Mammary epithelial cell (primary cell): ENCODE measurements at regions of chr2 and their contacts with region 1.

Region 1: GRCh38 chr2:241508240-241509154 is at the start of gene STK25:
- DNase-seq: peak; percentile 97
- H3K4me3 ChIP-seq: peak within 1 kb of the TSS; percentile 82 to 96 (median 94)
- H3K27ac ChIP-seq: peak within 1 kb of the TSS; percentile 18
- H3K4me1 ChIP-seq: peaks cover 21% of the 10 kb centered on the region
- H3K27me3 ChIP-seq: no peaks in the 10 kb centered on the region
- CTCF ChIP-seq: no peak
- total RNA-seq, gene STK25: 142 to 188 TPM

Region 2: DNA sequence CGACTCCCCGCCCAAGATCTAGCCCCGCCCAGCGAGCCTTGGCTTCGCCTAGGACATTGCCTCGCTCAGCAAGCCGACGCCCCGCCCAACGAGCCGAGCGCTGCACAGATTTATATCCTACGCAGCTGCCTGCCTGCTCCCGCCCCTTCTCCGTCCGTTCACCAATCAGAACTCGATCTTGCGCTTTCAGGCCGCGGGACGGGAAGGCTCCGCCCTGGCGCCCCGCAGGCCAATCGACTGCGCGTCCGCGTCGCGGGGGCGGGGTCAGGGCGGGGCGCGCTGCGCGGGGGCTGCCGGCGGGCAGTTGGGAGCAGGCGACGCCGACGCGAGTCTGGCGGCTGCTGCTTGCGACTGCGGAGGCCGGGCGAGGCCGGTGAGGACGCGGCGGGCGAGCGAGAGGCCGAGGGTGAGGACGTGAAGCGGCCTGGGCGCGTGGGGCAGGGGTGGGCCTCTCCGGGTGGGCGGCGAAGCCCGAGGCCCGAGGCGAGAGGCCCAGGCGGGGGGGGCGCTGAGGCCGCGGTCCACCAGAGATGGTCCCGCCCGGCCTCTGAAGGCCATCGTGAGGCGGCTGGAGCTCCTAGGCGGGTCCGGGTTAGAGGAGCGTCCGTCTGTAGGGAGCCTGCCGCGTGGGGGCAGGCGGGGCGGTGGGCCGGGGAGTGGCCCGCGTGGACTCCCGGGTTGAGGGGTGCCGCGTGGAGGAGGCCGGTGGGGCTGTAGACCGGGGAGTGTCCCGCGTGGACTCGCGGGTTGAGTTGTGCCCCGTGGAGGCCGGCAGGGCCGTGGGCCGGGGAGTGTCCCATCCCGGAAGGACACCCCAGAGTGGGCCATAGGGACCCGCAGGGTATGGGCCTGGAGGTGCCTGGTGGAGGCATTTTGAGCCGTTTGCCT is 152.3 kb before region 1 on chr2 and contains the start of gene FARP2:
- CTCF ChIA-PET with region 1: no interaction called
- dilution Hi-C with region 1: no loop called
- in situ Hi-C with region 1: no loop called
- intact Hi-C with region 1: loop called (anchors 10 kb)
- DNase-seq: peak; percentile 96
- H3K4me3 ChIP-seq: peak within 1 kb of the TSS; percentile 84 to 92 (median 86)
- H3K27ac ChIP-seq: peak within 1 kb of the TSS; percentile 59
- H3K4me1 ChIP-seq: peaks cover 16% of the 10 kb centered on the region
- H3K27me3 ChIP-seq: no peaks in the 10 kb centered on the region
- CTCF ChIP-seq: no peak
- total RNA-seq, gene FARP2: 38.5 to 40.2 TPM

Region 3: DNA sequence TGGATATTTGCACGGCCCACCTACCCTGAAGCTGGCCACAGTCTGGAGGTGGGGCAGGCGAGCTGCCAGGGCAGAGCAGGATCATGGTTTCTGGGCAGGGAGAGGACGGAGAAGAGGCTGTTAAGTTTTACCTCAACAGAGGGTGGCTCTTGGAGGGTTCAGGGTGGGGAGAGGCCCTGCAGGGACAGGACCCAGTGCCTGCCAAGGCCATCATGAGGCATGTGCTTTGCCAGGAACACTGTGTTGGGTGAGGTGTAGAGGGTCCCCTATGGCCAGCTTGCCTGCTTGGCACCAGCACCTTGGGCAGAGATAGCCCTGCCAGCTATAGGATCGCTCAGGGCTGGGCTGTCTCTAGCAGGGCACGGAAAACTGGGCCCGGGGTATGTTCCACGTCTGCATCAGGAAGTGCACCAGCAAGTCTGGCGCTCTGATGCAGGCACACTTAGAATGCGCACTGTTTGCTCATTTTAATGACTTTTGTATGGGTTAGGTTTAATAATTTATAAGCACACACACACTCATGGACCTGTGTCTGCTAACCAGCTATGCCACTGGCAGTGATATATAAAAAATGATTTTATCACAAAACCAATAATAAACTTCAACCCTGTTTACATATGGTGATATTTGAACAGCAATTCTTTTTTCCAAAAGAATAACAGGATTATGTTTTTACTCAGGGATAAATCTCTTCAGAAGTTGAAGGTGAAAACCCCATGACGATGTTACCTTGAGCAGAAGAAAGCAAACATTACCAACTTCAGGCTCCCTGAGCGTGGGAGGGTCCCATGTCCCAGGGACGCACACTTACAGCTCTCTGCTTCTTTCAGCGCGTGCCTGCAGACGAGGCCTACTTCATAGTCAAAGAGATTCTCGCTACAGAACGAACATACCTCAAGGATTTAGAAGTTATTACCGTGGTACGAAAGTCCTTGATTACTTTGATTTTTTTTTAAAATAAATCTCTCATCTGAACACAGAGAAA is 46.5 kb before region 1 on chr2:
- CTCF ChIA-PET with region 1: no interaction called
- dilution Hi-C with region 1: no loop called
- in situ Hi-C with region 1: no loop called
- intact Hi-C with region 1: no loop called
- DNase-seq: no peak
- H3K4me3 ChIP-seq: no peak overlapping the region
- H3K27ac ChIP-seq: no peak overlapping the region
- H3K4me1 ChIP-seq: no peaks in the 10 kb centered on the region
- H3K27me3 ChIP-seq: peaks cover 7% of the 10 kb centered on the region
- CTCF ChIP-seq: no peak

Region 4: GRCh38 chr2:241540771-241541561 is 32.5 kb after region 1 on chr2:
- CTCF ChIA-PET with region 1: no interaction called
- dilution Hi-C with region 1: no loop called
- in situ Hi-C with region 1: no loop called
- intact Hi-C with region 1: loop called (anchors 2 kb)
- DNase-seq: peak; percentile 56
- H3K4me3 ChIP-seq: peak overlapping the region; percentile 23 to 54 (median 39)
- H3K27ac ChIP-seq: no peak overlapping the region
- H3K4me1 ChIP-seq: peaks cover 18% of the 10 kb centered on the region
- H3K27me3 ChIP-seq: peaks cover 6% of the 10 kb centered on the region
- CTCF ChIP-seq: no peak

Region 5: DNA sequence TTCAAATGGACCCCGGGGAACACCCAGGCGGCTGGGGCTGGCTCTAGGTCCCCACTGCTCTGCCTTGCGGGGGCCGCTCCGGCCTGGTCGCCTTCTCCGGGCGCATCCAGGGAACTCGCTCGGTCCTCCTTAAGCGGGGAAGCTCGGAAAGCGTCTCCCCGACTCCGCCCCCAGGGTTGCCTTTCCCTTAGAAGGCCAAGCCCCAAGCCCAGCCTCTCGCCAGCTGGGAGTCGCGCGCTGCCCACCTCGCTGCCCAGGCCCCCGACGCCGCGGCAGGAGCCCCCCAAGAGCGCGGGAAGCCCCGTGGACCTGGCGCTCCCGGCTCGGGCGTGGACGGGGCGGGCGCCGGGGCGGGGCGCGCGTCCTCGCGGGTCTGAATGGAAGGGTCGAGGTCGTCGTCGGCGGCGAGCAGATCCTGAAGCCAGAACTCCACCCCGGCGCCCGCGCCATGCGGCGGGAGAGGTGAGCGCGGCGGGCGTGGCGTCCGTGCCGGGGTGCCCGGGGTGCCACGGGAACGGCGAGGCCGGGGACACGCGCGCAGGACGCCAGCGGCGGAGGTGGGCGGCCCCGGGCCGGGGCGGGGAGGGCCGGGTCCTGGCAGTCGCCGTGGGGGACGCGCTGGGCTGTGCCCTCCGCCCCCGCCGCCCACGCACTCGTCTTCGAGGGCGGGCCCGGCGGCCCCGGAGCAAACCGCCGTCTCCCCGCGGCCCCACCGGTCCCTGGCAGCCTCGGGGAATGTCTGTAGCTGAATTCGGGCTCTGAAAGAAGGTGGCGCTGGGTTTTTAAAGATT is 50.2 kb after region 1 on chr2 and contains the start of gene BOK:
- CTCF ChIA-PET with region 1: no interaction called
- dilution Hi-C with region 1: loop called (anchors 5 kb)
- in situ Hi-C with region 1: no loop called
- intact Hi-C with region 1: loop called (anchors 1 kb)
- DNase-seq: peak; percentile 59
- H3K4me3 ChIP-seq: peak within 1 kb of the TSS; percentile 67 to 88 (median 70)
- H3K27ac ChIP-seq: peak within 1 kb of the TSS; percentile 28
- H3K4me1 ChIP-seq: peaks cover 44% of the 10 kb centered on the region
- H3K27me3 ChIP-seq: no peaks in the 10 kb centered on the region
- CTCF ChIP-seq: no peak
- total RNA-seq, gene BOK: 21.3 to 38.5 TPM

Region 6: DNA sequence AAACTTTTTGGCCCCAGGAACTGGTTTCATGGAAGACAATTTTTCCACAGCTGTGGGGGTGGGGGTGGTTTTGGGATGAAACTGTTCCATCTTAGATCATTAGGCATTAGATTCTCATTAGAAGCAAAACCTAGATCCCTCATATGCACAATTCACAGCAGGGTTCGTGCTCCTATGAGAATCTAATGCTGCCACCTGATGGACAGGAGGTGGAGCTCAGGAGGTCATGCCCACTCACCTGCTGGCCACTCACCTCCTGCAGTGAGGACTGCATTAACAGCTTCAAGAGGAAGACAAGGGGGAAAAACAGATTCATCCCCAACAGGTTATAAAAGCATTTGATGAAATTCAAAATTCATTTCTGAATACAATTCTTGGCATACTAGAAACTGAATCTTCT is 90.0 kb after region 1 on chr2:
- CTCF ChIA-PET with region 1: no interaction called
- dilution Hi-C with region 1: no loop called
- in situ Hi-C with region 1: no loop called
- intact Hi-C with region 1: loop called (anchors 5 kb)
- DNase-seq: peak; percentile 11
- H3K4me3 ChIP-seq: no peak overlapping the region
- H3K27ac ChIP-seq: no peak overlapping the region
- H3K4me1 ChIP-seq: no peaks in the 10 kb centered on the region
- H3K27me3 ChIP-seq: no peaks in the 10 kb centered on the region
- CTCF ChIP-seq: peak; percentile 22 to 51

Region 7: DNA sequence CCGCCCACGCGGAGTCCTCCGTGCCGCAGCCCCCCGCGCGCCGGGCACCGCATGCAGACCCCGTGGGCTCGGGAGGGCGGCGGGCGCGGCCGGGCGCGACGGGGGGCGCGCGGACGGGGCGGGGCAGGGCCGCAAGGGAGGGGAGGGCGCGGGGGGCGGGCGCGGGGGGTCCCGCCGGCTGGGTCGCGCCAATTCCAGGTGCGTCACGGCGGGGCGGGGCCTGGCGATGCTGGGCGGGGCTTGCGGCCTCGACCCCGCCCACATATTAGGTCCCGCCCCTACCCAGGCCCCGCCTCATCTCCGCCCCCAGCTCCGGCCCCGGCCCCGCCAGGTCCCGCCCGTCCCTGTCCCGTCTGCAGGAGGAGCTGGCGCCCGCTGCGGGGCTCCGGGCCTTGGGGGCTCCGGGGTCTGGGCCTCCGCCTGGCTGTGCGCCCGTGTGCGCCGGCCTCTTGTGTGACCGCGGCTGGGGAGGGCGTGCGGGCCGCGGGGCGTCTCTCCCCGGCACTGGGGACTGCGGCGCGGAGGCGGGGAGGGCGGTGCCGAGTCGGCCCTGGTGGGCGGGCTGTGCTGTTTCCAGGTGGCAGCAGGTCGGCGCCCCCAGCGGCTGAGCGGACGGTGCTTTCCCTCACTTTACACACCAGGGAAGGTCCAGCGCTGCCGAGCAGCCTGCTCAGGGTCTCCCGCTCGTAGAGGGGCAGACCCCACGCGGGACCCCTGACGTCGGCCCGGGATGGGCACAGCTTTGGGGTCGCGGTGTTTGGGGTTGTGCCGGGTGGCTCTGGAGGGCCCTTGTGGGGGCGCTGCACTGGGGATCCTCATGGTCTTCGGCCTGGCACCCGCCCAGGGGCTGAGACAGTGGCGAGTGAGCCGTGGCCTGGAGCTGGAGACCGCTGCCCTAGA is 193.9 kb after region 1 on chr2:
- CTCF ChIA-PET with region 1: no interaction called
- dilution Hi-C with region 1: no loop called
- in situ Hi-C with region 1: no loop called
- intact Hi-C with region 1: no loop called
- DNase-seq: peak; percentile 81
- H3K4me3 ChIP-seq: peak overlapping the region; percentile 89 to 93 (median 90)
- H3K27ac ChIP-seq: peak overlapping the region; percentile 50
- H3K4me1 ChIP-seq: peaks cover 13% of the 10 kb centered on the region
- H3K27me3 ChIP-seq: no peaks in the 10 kb centered on the region
- CTCF ChIP-seq: peak; percentile 24 to 40